ENCODE measurements at regions of chr5 and their contacts with region 1.

Region 1: GRCh38 chr5:138542956-138543729 is at the start of gene ETF1:
- DNase-seq: peak; percentile 100
- H3K4me3 ChIP-seq: peak within 1 kb of the TSS; percentile 87 to 99 (median 98)
- H3K27ac ChIP-seq: peak within 1 kb of the TSS; percentile 100
- H3K4me1 ChIP-seq: peaks cover 23 to 49% (median 36%) of the 10 kb centered on the region in 4 experiments
- H3K27me3 ChIP-seq: no peaks in the 10 kb centered on the region

Region 2: DNA sequence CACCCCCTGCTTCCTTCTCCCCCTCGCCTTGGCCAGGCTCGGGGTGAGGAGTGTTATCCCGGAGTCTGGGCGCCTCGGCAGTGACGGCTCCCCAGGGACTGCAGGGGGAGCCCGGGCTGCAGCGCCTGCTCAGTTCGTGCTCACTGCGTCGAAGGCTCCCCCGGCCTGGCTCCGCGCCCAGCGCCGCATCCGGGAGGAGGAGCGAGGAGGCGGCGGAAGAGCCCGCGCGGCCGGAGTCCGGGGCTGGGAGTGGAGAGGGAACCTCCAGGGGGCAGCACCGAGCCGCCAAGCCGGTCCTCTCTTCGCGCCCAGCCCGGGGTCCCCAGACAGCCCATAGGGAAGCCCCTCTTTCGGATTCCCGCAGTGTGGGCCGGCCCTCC is 79.1 kb before region 1 on chr5:
- CTCF ChIA-PET with region 1: interaction called, 3 read pairs
- POLR2A ChIA-PET with region 1: interaction called, 11 read pairs
- DNase-seq: peak; percentile 95 to 97 (median 95)
- H3K4me3 ChIP-seq: peak overlapping the region; percentile 73 to 89 (median 80)
- H3K27ac ChIP-seq: peak overlapping the region; percentile 66 to 88
- H3K4me1 ChIP-seq: peaks cover 2 to 43% (median 36%) of the 10 kb centered on the region in 4 experiments
- H3K27me3 ChIP-seq: peaks cover 0 to 24% (median 8%) of the 10 kb centered on the region in 5 experiments

Region 3: DNA sequence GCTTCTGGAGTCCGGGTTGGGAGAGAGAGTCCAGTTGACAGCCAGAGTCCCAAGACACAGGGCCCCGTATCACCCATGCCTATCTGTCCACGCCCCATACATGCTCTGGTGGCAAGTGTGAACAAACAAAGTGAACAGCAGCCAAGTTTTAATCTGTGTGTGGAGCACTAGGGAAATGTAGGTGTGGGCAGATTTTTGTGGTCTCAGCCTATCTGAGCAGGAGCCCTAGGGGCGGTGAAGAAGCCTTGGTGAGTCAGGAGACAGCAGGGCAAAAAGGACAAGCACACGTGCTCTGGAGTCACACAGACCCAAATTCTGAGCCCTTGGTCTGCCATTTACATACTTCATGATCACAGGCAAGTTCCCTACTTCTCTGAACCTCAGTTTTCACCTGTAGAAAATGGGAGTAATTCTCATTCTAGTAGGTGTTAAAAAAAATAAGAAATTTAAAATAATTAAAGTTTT is 54.6 kb before region 1 on chr5:
- CTCF ChIA-PET with region 1: no interaction called
- POLR2A ChIA-PET with region 1: no interaction called
- DNase-seq: peak in 1 of 3 donors; percentile 48
- H3K4me3 ChIP-seq: no peak overlapping the region
- H3K27ac ChIP-seq: no peak overlapping the region
- H3K4me1 ChIP-seq: peaks cover 0 to 18% (median 17%) of the 10 kb centered on the region in 4 experiments
- H3K27me3 ChIP-seq: peaks cover 9 to 38% (median 10%) of the 10 kb centered on the region in 5 experiments

Region 4: GRCh38 chr5:138528208-138528607 is 14.9 kb before region 1 on chr5:
- CTCF ChIA-PET with region 1: interaction called, 24 read pairs
- POLR2A ChIA-PET with region 1: interaction called, 4 read pairs
- DNase-seq: no peak
- H3K4me3 ChIP-seq: no peak overlapping the region
- H3K27ac ChIP-seq: no peak overlapping the region
- H3K4me1 ChIP-seq: peaks cover 0 to 2% (median 0%) of the 10 kb centered on the region in 4 experiments
- H3K27me3 ChIP-seq: no peaks in the 10 kb centered on the region

Region 5: GRCh38 chr5:138559937-138560336 is 16.8 kb after region 1 on chr5:
- CTCF ChIA-PET with region 1: interaction called, 11 read pairs
- POLR2A ChIA-PET with region 1: interaction called, 4 read pairs
- DNase-seq: no peak
- H3K4me3 ChIP-seq: no peak overlapping the region
- H3K27ac ChIP-seq: peak overlapping the region in 1 of 2 experiments; percentile 3
- H3K4me1 ChIP-seq: no peaks in the 10 kb centered on the region
- H3K27me3 ChIP-seq: no peaks in the 10 kb centered on the region

Region 6: GRCh38 chr5:138623053-138623452 is 79.9 kb after region 1 on chr5:
- CTCF ChIA-PET with region 1: no interaction called
- POLR2A ChIA-PET with region 1: no interaction called
- DNase-seq: no peak
- H3K4me3 ChIP-seq: no peak overlapping the region
- H3K27ac ChIP-seq: no peak overlapping the region
- H3K4me1 ChIP-seq: no peaks in the 10 kb centered on the region
- H3K27me3 ChIP-seq: no peaks in the 10 kb centered on the region